Activated B cell treated with CpG ODN at 0.5 μM for 24 hours (primary cell): ENCODE measurements at regions of chr1 and their contacts with region 1.

Region 1: DNA sequence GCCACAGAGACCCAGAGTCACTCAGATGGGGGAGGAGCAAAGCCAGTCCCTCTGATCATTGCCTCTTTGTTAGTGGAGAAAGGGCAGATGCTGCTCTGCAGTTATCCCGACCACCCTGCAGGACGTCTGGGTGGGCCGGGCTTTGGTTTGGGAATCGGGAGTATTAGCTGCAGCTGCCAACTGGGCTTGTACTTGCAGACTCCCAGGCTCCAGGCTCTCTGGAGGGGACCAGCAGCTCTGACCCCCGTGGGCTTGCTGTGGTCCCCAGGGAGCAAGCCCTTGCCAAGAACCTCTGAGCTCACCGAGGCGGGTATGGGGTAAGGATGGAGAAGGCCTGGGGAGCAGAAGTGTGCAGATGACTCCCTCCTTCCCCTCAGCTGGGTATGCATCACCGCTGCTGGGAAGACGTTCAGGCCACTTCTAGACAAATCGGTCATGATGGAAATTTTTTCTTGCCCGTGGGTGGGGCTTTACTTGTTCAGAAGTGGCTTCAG is 21.6 kb downstream of the MAPKAPK2 start:
- DNase-seq: no peak
- ATAC-seq: peak; percentile 14
- H3K4me3 Mint-ChIP-seq: peak overlapping the region; percentile 18
- H3K27ac Mint-ChIP-seq: peak overlapping the region; percentile 33
- H3K4me1 Mint-ChIP-seq: peaks cover 91% of the 10 kb centered on the region
- H3K27me3 Mint-ChIP-seq: no peaks in the 10 kb centered on the region
- CTCF ChIP-seq: no peak

Region 2: GRCh38 chr1:206719169-206719839 is 13.0 kb after region 1 on chr1:
- CTCF ChIA-PET with region 1: interaction called, 4 read pairs
- POLR2A ChIA-PET with region 1: interaction called, 8 read pairs
- intact Hi-C with region 1: loop called (anchors 1 kb)
- DNase-seq: no peak
- ATAC-seq: peak; percentile 81
- H3K4me3 Mint-ChIP-seq: peak overlapping the region; percentile 42
- H3K27ac Mint-ChIP-seq: peak overlapping the region; percentile 90
- H3K4me1 Mint-ChIP-seq: peaks cover 73% of the 10 kb centered on the region
- H3K27me3 Mint-ChIP-seq: no peaks in the 10 kb centered on the region
- CTCF ChIP-seq: no peak

Region 3: DNA sequence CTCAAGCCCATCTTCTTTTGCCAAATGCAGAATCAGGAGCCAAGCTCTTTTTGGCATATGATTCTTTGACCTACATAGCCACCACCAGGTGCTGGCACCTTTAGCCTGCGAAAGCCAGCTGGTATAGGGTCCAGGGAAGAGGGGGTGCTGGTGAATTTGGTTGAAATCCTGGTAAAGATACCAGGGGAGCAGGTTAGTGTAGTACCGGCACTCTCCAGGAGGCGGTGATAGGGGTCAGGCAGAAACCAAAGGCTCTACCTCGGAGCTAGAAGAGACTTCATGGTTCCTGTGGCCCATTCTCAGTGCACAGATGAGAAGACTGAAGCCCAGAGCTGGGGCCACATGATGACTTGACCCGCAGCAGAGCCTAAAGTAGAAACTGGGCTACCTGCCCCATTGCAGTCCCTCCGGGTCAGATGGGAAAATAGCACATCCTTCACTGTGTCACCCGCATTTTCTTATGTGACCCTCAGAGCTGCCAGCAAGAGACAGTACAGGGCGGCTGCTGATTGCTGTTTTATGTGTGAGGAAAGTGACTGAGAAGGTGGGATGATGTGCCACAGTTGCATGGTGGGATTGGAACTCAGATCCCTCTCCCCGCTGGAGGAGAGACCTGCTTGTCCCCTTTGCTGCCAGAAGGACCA is 28.3 kb after region 1 on chr1:
- CTCF ChIA-PET with region 1: no interaction called
- POLR2A ChIA-PET with region 1: no interaction called
- intact Hi-C with region 1: no loop called
- DNase-seq: peak; percentile 74
- ATAC-seq: peak; percentile 69
- H3K4me3 Mint-ChIP-seq: no peak overlapping the region
- H3K27ac Mint-ChIP-seq: peak overlapping the region; percentile 24
- H3K4me1 Mint-ChIP-seq: peaks cover 43% of the 10 kb centered on the region
- H3K27me3 Mint-ChIP-seq: no peaks in the 10 kb centered on the region
- CTCF ChIP-seq: peak; percentile 41